ENCODE measurements at regions of chr2 and their contacts with region 1.

Region 1: DNA sequence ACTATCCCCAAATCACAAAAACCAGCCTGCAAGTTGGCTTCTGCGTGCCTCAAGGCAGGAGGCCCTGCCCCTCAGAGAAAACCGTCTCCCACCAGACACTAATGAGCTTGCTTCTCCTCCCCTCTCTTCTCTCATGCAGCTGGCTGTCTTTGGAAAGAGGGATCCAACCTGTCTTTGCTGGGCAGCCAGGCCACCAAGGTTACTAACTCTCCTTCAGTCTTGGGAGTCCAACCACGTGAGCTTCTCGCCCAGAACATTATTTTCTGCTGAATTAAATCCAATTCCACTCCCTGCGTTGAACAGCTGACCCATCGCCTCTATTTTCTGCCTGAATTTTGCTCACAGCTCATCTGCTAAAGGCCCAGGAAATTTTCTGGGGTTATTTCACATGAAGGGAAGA is 291.3 kb upstream of the NCKAP5 start:
- DNase-seq: no peak
- ATAC-seq: no peak
- H3K4me3 Mint-ChIP-seq: no peak overlapping the region
- H3K27ac Mint-ChIP-seq: no peak overlapping the region
- H3K4me1 Mint-ChIP-seq: no peaks in the 10 kb centered on the region
- H3K27me3 Mint-ChIP-seq: peaks cover 8% of the 10 kb centered on the region

Region 2: GRCh38 chr2:133844214-133844892 is 15.2 kb before region 1 on chr2:
- CTCF ChIA-PET with region 1: interaction called, 14 read pairs
- POLR2A ChIA-PET with region 1: no interaction called
- DNase-seq: peak; percentile 67
- ATAC-seq: peak; percentile 74
- H3K4me3 Mint-ChIP-seq: no peak overlapping the region
- H3K27ac Mint-ChIP-seq: no peak overlapping the region
- H3K4me1 Mint-ChIP-seq: no peaks in the 10 kb centered on the region
- H3K27me3 Mint-ChIP-seq: peaks cover 8% of the 10 kb centered on the region

Measured in activated CD8-positive, alpha-beta T cell treated with anti-CD3 and anti-CD28 coated beads, Interleukin-2, amount 10 ng/mL, durations not matched to agents 7 days and 5 days (primary cell).